ENCODE measurements at regions of chr5 and their contacts with region 1.

Region 1: GRCh38 chr5:43040287-43041098 is at the start of gene ANXA2R:
- DNase-seq: peak; percentile 87
- ATAC-seq: peak; percentile 48
- H3K4me3 Mint-ChIP-seq: peak within 1 kb of the TSS; percentile 93
- H3K27ac Mint-ChIP-seq: peak within 1 kb of the TSS; percentile 99
- H3K4me1 Mint-ChIP-seq: peaks cover 34% of the 10 kb centered on the region
- H3K27me3 Mint-ChIP-seq: no peaks in the 10 kb centered on the region
- total RNA-seq, gene ANXA2R: 39.2 to 41.1 TPM

Region 2: DNA sequence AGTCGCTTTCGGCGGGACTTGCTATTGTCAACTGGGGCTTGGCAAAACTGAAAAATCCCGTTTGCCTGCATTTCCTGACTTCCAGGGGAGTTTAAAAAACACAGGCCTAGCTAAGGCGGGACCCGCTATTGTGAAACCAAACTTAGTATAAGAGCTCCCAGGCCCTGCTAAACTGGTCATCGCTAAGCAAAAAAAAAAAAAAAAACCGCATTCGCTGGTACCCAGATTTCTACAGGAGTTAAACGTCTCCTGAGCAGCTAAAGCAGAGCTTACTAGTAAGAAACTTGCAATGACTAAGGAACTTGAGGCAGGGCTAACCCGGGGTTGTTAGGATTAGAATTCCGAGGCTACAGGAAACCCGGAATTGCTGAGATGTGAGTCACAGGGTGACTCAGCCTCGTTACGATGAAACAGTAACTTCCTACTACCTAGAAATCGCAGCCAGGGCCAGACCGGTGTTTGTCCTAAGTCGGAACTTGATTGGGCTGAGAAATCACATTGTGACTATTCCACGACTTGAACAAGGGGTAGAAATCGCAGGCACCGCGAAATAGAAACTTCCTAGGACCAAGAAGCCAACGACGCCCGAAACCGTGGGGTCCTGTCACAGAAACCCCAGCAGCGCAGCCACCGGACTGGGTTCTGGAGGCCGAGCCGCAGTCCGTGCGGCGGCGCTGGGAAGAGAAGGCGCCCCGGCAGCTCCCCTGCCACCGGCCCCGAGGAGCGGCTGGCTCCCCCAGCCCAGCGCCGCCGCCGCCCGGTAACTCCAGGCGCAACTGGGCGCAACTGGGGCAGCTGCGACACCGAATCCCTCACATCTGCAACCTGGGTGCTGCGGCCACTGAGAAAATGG is 89.8 kb before region 1 on chr5:
- POLR2A ChIA-PET with region 1: interaction called, 157 read pairs
- DNase-seq: peak; percentile 35
- ATAC-seq: peak; percentile 38
- H3K4me3 Mint-ChIP-seq: peak overlapping the region; percentile 96
- H3K27ac Mint-ChIP-seq: peak overlapping the region; percentile 100
- H3K4me1 Mint-ChIP-seq: peaks cover 20% of the 10 kb centered on the region
- H3K27me3 Mint-ChIP-seq: no peaks in the 10 kb centered on the region

Region 3: DNA sequence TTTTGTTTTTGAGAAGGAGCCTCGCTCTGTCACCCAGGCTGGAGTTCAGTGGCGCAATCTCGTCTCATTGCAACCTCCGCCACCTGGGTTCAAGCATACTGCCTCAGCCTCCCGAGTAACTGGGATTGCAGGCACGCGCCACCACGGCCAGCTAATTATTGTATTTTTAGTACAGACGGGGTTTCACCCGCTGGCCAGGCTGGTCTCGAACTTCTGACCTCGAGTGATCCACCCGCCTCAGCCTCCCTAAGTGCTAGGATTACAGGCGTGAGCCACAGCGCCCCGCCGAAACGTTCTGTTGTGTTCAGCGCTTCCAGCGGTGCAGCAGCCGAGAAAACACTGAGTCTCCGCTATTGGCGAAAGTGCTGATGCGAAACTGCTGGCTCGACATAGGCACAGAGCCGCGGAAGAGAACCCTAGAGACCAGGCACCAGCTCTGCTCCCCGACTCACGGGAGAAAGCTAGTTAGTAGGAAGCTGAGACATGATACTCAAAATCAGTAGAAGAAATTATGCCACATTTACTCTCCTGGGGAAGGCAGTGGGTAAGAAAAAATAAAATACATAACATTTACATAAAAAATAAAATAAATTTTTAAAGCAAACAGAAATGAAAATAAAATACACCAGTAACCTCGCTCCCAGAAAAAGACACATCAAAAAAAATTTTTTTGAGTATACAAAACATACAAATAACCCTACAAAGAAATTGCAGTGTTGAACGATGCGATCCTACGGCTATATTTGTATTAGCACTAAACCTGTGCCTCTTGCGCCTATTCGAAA is 31.9 kb before region 1 on chr5:
- POLR2A ChIA-PET with region 1: interaction called, 261 read pairs
- DNase-seq: peak; percentile 88
- ATAC-seq: peak; percentile 61
- H3K4me3 Mint-ChIP-seq: peak overlapping the region; percentile 90
- H3K27ac Mint-ChIP-seq: peak overlapping the region; percentile 99
- H3K4me1 Mint-ChIP-seq: peaks cover 35% of the 10 kb centered on the region
- H3K27me3 Mint-ChIP-seq: no peaks in the 10 kb centered on the region

Region 4: GRCh38 chr5:43066799-43067741 is 26.6 kb after region 1 on chr5:
- POLR2A ChIA-PET with region 1: interaction called, 300 read pairs
- DNase-seq: peak; percentile 85
- ATAC-seq: peak; percentile 39
- H3K4me3 Mint-ChIP-seq: peak overlapping the region; percentile 99
- H3K27ac Mint-ChIP-seq: peak overlapping the region; percentile 100
- H3K4me1 Mint-ChIP-seq: peaks cover 30% of the 10 kb centered on the region
- H3K27me3 Mint-ChIP-seq: no peaks in the 10 kb centered on the region

Region 5: GRCh38 chr5:43099615-43100014 is 59.1 kb after region 1 on chr5:
- POLR2A ChIA-PET with region 1: no interaction called
- DNase-seq: no peak
- ATAC-seq: no peak
- H3K4me3 Mint-ChIP-seq: no peak overlapping the region
- H3K27ac Mint-ChIP-seq: no peak overlapping the region
- H3K4me1 Mint-ChIP-seq: peaks cover 15% of the 10 kb centered on the region
- H3K27me3 Mint-ChIP-seq: no peaks in the 10 kb centered on the region

Region 6: DNA sequence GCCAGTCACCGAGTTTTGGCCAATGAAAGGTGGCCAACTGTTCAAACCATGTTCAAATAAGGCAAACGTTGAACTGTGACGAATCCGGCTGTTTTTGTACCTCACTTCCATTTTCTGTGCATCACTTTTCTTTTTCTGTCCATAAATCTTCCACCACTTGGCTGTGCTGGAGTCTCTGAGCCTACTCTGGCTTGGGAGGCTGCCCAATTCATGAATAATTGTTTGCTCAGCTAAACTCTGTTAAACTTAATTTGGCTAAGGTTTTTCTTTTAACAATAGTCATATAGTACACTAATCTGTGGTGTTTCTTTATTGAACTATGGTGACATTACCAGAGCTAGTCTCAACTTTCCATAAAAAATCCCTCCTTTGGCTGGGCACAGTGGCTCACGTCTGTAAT is 162.9 kb after region 1 on chr5:
- POLR2A ChIA-PET with region 1: no interaction called
- DNase-seq: no peak
- ATAC-seq: no peak
- H3K4me3 Mint-ChIP-seq: no peak overlapping the region
- H3K27ac Mint-ChIP-seq: no peak overlapping the region
- H3K4me1 Mint-ChIP-seq: no peaks in the 10 kb centered on the region
- H3K27me3 Mint-ChIP-seq: peaks cover 4% of the 10 kb centered on the region

Measured in activated naive CD8-positive, alpha-beta T cell treated with anti-CD3 and anti-CD28 coated beads, Interleukin-2, amount 10 ng/mL, durations not matched to agents 7 days and 5 days (primary cell).